Activated naive CD4-positive, alpha-beta T cell treated with anti-CD3 and anti-CD28 coated beads, Interleukin-2, amount 10 ng/mL, durations not matched to agents 7 days and 5 days (primary cell): ENCODE measurements at regions of chr14 and their contacts with region 1.

Region 1: DNA sequence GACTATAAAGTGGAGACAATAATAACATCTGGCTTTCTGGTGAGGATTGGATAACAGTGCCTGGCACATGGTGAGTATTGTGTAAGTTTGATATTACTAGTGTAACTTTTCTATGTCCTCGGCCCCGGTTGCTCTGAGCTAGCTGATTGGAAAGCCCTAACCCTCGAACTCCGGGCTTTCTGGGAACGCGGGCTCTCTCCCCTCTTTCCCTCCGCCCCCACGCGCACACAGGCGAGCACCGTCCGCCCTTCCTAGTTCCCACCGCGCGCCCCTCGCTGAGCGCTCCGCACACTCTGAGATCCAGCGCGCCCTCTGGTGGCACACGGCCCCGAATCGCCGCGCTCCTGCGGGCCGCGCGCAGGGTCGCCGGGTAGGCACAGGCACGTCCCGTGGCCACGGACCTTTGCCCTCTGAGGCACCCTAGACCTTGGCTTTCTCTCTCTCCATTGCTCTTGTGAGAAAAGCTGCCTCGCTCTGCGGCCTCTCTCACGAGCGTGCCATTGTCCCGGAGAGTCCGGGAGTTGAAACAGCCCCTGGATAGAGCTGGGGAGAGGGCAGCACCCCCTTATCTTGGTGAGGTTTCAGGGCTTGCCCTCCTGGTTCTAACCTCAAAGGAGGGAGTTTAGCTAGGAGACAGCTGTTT is 23.2 kb upstream of the ESRRB start:
- DNase-seq: peak; percentile 65
- H3K4me3 Mint-ChIP-seq: no peak overlapping the region
- H3K27ac Mint-ChIP-seq: no peak overlapping the region
- H3K4me1 Mint-ChIP-seq: peaks cover 4% of the 10 kb centered on the region
- H3K27me3 Mint-ChIP-seq: peaks cover 58% of the 10 kb centered on the region

Region 2: GRCh38 chr14:76045773-76046172 is 307.0 kb before region 1 on chr14:
- CTCF ChIA-PET with region 1: interaction called, 50 read pairs
- DNase-seq: no peak
- H3K4me3 Mint-ChIP-seq: no peak overlapping the region
- H3K27ac Mint-ChIP-seq: no peak overlapping the region
- H3K4me1 Mint-ChIP-seq: no peaks in the 10 kb centered on the region
- H3K27me3 Mint-ChIP-seq: no peaks in the 10 kb centered on the region

Region 3: GRCh38 chr14:76050797-76051392 is 301.9 kb before region 1 on chr14:
- CTCF ChIA-PET with region 1: interaction called, 50 read pairs
- DNase-seq: peak; percentile 71
- H3K4me3 Mint-ChIP-seq: no peak overlapping the region
- H3K27ac Mint-ChIP-seq: no peak overlapping the region
- H3K4me1 Mint-ChIP-seq: no peaks in the 10 kb centered on the region
- H3K27me3 Mint-ChIP-seq: no peaks in the 10 kb centered on the region

Region 4: DNA sequence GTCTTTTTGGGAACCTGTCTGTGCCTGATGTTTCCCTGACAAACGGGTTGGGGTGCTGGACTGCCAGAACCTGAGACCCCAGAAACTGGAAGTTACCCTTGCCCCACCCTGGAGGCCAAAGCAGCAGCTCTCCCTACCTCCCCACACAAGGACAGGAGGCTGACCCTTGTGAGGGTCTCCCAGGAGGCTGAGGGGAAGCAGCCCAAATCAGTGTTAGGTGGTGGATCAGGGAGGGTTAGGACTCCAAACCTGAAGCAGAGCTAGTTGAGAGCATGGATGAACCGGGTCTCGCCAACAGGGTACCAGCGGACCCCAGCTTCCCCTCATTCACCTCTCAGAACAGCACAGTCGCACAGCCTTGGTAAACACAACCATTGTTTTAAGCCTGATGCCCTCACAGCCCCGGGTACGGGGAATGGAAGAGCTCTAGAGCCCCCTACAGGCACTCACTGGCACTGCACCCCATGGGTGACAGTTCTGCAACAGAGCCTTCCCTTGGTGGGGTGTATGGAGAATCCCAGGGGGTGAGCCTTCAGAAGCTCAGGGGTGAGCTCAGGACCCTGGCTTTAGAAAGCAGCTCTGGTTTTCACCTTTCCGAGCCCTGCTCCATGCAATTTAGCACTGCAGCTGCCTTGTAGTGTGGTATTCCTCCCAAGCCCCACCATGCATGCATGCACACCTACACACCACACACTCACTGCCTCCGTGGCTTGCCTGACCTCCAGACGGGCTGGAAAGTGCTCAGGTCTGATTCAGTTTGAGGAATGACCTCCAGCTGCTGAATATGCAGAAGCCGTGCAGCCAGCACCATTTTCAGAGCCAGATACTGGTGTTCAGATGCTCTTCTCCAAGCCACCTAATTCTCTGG is 34.4 kb after region 1 on chr14:
- CTCF ChIA-PET with region 1: interaction called, 13 read pairs
- DNase-seq: peak; percentile 75
- H3K4me3 Mint-ChIP-seq: no peak overlapping the region
- H3K27ac Mint-ChIP-seq: no peak overlapping the region
- H3K4me1 Mint-ChIP-seq: no peaks in the 10 kb centered on the region
- H3K27me3 Mint-ChIP-seq: peaks cover 18% of the 10 kb centered on the region